ENCODE measurements at regions of chr1 and their contacts with region 1.

Region 1: DNA sequence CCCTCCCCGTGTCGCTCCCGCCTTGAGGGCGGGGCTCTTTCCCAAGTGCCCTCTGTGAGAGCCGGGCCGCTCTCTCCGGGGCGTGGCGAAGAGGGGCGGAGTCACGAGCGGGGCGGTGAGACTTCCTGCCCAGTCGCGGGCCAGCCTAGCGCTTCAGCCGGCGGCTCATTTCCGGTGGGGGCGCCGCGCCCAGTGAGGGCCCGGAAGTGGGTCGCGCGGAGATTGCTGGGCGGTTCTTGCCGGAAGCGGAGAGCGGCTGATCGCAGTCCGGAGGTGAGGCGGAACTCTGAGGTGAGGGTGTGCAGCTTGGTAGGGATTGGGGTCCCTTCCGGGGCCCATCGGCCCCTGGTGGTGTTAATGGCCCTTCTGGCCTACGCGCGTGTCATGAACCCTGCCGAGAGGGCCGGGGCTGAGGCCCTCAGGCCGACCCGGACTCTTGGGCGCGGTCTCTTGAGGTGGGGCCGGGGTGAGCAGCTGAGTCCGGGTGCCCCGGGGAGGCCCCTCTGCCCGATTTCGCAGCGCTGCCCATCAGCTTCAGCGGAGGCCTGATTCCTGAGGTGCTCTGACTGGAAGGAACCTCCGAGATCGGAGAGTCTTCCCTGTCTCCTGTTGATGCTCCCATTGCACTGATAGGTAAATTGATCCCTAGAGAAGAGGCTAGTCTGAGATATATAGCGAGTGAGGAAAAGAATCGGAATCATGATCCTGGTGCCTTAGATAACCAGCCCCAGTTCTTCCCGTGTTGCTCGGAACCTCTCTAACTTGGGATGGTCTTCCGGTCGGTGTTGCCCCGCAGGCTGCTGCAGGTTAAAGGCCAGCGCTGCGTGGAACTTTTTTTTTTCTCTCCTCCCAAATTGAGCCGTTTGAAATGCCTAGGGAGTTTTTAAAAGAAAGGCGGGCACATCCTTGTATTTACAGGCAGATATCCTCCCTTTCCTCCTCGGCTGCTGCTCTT is at the start of gene CAP1:
- DNase-seq: peak; percentile 97 to 100 (median 100)
- ATAC-seq: peak; percentile 81 to 84
- H3K4me3 Mint-ChIP-seq: peak within 1 kb of the TSS; percentile 76 to 100 (median 95)
- H3K27ac Mint-ChIP-seq: peak within 1 kb of the TSS; percentile 78 to 99 (median 96)
- H3K4me1 Mint-ChIP-seq: peaks cover 32 to 86% (median 75%) of the 10 kb centered on the region in 4 donors
- H3K27me3 Mint-ChIP-seq: no peaks in the 10 kb centered on the region
- polyA plus RNA-seq, gene CAP1: 610 to 675 (median 672) TPM

Region 2: GRCh38 chr1:39745016-39745670 is 295.6 kb before region 1 on chr1:
- POLR2A ChIA-PET with region 1: no interaction called
- DNase-seq: no peak
- ATAC-seq: no peak
- H3K4me3 Mint-ChIP-seq: no peak overlapping the region
- H3K27ac Mint-ChIP-seq: peak overlapping the region in 1 of 10 donors; percentile 8
- H3K4me1 Mint-ChIP-seq: peaks cover 11 to 33% (median 18%) of the 10 kb centered on the region in 4 donors
- H3K27me3 Mint-ChIP-seq: no peaks in the 10 kb centered on the region

Region 3: DNA sequence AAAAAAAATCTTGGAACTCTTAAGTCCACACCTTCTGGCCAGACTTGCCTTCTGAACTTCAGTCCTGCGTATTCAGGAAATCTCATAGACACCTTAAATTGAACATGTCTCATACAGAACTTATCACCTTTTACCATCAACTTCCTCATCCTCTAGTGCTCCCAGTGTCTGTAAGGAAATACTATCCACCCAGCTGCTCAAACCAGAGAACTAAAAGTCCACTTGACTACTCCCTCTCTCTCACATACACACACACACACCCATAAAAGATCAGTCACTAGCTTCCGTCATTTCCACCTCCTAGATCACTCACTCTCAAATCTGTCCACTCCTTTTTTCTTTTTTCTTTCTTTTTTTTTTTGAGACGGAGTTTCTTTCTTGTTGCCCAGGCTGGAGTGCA is 11.2 kb before region 1 on chr1:
- POLR2A ChIA-PET with region 1: interaction called, 12 read pairs
- DNase-seq: no peak
- ATAC-seq: no peak
- H3K4me3 Mint-ChIP-seq: peak overlapping the region in 1 of 10 donors; percentile 35
- H3K27ac Mint-ChIP-seq: peak overlapping the region in 3 of 10 donors; percentile 5 to 74 (median 71)
- H3K4me1 Mint-ChIP-seq: peaks cover 18 to 40% (median 30%) of the 10 kb centered on the region in 4 donors
- H3K27me3 Mint-ChIP-seq: peaks cover 0 to 3% (median 0%) of the 10 kb centered on the region in 5 donors

Region 4: DNA sequence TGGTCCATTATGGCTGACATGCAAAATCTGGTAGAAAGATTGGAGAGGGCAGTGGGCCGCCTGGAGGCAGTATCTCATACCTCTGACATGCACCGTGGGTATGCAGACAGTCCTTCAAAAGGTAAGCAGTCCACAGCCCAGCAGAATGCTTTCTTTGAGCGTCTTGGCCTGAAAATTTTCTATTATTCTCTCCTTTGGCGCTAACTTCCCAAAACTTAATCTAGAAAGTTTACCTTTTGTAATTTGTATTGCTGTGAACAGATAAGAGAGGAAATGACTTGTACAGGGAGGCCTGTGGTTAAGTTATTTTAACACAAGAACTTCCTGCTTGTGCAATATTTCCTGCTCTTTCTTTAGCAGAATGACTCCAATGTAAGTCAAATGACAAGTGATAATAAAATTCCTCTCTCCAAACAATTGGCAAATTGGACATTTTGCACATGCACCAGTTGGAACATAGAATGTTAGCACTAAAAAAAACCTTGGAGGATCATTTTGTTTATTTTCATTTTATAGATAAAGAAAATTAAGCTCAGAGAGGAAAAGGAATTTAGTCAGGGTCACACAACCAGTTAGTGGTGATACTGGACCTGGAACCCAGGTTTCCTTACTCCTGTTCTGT is 18.7 kb after region 1 on chr1:
- POLR2A ChIA-PET with region 1: interaction called, 246 read pairs
- DNase-seq: peak in 3 of 10 donors; percentile 59 to 63 (median 61)
- ATAC-seq: peak; percentile 76 to 87
- H3K4me3 Mint-ChIP-seq: peak overlapping the region; percentile 72 to 86 (median 78)
- H3K27ac Mint-ChIP-seq: peak overlapping the region; percentile 82 to 96 (median 90)
- H3K4me1 Mint-ChIP-seq: peaks cover 48 to 97% (median 91%) of the 10 kb centered on the region in 4 donors
- H3K27me3 Mint-ChIP-seq: no peaks in the 10 kb centered on the region

Region 5: DNA sequence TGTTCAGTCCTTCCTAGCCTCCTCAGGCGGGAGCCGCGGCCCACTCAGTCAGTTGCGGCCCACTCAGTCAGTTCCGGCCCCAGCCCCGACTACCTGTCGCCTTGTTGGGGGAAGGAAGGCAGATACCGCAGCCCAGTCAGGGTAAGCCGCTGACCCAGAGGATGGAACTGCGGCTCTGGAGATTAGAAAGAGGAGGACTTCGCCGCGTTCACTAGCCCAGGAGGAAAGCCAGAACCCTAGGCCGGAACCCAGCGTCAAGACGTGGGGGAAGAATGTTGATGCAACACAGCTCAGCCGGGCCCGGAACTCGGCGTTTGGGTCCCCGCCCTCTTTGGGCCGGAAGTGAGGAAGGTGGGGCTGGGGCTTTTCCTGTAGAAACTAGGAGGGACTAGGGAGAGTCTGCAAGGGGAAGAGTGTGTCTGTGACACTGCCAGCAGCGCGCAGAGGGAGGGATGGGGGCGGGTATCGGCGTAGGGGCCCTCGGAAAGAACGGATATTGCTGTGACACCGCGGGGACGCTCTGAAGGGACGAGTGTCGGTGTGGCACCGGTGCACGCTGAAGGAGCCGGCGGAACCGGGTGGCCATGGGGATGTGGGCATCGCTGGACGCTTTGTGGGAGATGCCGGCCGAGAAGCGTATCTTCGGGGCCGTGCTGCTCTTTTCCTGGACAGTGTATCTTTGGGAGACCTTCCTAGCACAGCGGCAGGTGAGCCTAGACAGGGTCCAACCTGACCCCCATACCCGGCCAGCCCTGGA is 217.1 kb after region 1 on chr1 and contains the start of gene ZMPSTE24:
- POLR2A ChIA-PET with region 1: interaction called, 11 read pairs
- DNase-seq: peak; percentile 85 to 99 (median 96)
- ATAC-seq: peak; percentile 95 to 97
- H3K4me3 Mint-ChIP-seq: peak within 1 kb of the TSS; percentile 95 to 99 (median 98)
- H3K27ac Mint-ChIP-seq: peak within 1 kb of the TSS; percentile 97 to 100 (median 100)
- H3K4me1 Mint-ChIP-seq: peaks cover 23 to 68% (median 49%) of the 10 kb centered on the region in 4 donors
- H3K27me3 Mint-ChIP-seq: no peaks in the 10 kb centered on the region
- polyA plus RNA-seq, gene ZMPSTE24: 20.8 to 23.6 (median 23.0) TPM

Region 6: DNA sequence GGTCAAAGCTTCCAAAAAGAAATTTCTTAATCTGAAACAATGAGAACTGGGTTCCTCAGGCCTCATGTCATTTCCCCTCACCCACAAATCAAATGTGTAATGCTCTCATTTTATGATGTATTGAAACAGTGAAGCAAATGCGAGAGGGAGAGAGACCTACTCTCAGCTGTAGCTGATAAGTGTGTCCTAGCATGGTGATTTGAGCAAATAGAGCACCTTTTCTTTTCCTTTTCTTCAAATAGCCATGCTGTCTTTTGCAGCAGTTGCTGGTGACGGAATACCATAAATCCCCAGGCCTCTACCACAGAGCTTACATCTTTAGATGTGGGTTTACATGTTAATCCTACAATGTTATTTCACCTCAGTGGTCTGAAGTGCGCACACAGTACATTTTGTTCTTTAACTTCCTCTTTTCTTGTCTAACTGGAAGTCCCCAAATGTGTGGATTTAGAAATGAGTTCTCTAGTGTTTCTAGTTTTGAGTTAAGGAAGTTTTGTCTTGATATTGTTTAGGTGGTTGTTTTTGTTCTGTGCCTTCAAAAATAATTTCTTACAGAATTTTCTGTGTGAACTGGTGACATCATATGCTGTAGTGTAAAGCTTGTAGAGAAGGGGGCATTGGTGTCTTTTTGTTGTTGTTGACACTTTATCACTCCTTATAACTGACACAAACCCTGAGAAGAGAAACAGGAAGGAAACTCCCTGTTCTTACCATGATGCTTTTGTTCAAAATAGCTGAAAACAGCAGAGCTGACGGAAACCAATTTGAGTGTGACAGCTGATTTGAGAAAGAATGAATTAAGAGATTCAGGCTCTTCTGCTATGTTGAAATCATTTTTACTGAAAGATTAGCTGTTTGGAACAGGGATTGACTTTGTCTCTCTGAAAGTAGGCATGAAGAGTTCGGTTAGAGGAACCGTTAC is 344.9 kb after region 1 on chr1:
- POLR2A ChIA-PET with region 1: interaction called, 12 read pairs
- DNase-seq: peak; percentile 26 to 95 (median 86)
- ATAC-seq: peak; percentile 75
- H3K4me3 Mint-ChIP-seq: peak overlapping the region; percentile 78 to 97 (median 86)
- H3K27ac Mint-ChIP-seq: peak overlapping the region; percentile 97 to 100 (median 99)
- H3K4me1 Mint-ChIP-seq: peaks cover 52 to 96% (median 86%) of the 10 kb centered on the region in 4 donors
- H3K27me3 Mint-ChIP-seq: no peaks in the 10 kb centered on the region